Activated CD4-positive, alpha-beta memory T cell treated with anti-CD3 and anti-CD28 coated beads for 36 hours (primary cell): ENCODE measurements at regions of chr16 and their contacts with region 1.

Region 1: GRCh38 chr16:56657555-56658326 is at the start of gene MT1F:
- DNase-seq: peak; percentile 84
- H3K4me3 Mint-ChIP-seq: peak within 1 kb of the TSS; percentile 94
- H3K27ac Mint-ChIP-seq: peak within 1 kb of the TSS; percentile 69
- H3K4me1 Mint-ChIP-seq: peaks cover 14% of the 10 kb centered on the region
- H3K27me3 Mint-ChIP-seq: peaks cover 4% of the 10 kb centered on the region
- total RNA-seq, gene MT1F: 8.5 to 9.2 TPM

Region 2: DNA sequence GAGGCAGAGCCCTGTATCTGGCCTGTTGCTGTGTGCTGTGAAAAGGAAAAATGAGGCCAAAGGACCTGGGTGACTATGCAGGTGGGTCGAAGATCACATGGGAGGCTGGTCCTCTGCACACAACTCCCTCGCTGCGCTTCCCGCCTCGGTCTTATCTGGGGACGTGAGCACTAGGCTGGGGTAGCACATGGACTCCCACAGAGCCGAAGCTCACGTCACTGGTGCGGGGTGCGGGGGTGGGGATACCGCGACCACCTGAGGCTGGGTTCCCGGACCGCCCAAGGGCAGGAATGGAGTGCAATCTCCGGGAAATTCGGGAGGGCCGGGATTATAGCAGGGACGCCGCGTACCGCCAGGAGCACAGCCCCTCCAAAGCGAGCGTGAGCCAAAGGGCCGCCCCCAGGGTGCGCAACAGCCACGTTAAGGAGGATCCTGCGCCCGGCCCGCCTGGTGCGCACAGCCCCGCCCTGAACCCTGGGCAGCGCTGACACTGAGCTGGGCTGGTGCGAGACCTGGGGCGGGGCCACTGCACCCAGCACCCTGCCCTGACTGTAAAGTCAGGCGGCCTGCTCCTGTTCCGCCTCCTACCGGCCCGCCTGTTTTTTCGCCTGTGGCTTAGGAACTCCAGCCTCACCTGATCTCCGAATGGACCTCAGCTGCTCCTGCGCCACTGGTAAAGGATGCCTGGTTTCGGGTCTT is 14.5 kb before region 1 on chr16:
- CTCF ChIA-PET with region 1: interaction called, 8 read pairs
- POLR2A ChIA-PET with region 1: no interaction called
- intact Hi-C with region 1: loop called (anchors 1 kb)
- DNase-seq: peak; percentile 89
- H3K4me3 Mint-ChIP-seq: peak overlapping the region; percentile 54
- H3K27ac Mint-ChIP-seq: no peak overlapping the region
- H3K4me1 Mint-ChIP-seq: peaks cover 18% of the 10 kb centered on the region
- H3K27me3 Mint-ChIP-seq: peaks cover 36% of the 10 kb centered on the region

Region 3: GRCh38 chr16:56673921-56674320 is 16.2 kb after region 1 on chr16:
- CTCF ChIA-PET with region 1: interaction called, 4 read pairs
- POLR2A ChIA-PET with region 1: no interaction called
- intact Hi-C with region 1: loop called (anchors 2 kb)
- DNase-seq: peak; percentile 50
- H3K4me3 Mint-ChIP-seq: no peak overlapping the region
- H3K27ac Mint-ChIP-seq: no peak overlapping the region
- H3K4me1 Mint-ChIP-seq: peaks cover 18% of the 10 kb centered on the region
- H3K27me3 Mint-ChIP-seq: peaks cover 39% of the 10 kb centered on the region